Motor neuron (in vitro differentiated cells): ENCODE measurements at regions of chr17 and their contacts with region 1.

Region 1: GRCh38 chr17:46121841-46122485 is 71.3 kb downstream of the KANSL1 start:
- ATAC-seq: no peak
- H3K4me3 ChIP-seq: no peak overlapping the region
- H3K27ac ChIP-seq: no peak overlapping the region
- H3K4me1 ChIP-seq: peaks cover 0 to 3% of the 10 kb centered on the region in 2 donors

Region 2: DNA sequence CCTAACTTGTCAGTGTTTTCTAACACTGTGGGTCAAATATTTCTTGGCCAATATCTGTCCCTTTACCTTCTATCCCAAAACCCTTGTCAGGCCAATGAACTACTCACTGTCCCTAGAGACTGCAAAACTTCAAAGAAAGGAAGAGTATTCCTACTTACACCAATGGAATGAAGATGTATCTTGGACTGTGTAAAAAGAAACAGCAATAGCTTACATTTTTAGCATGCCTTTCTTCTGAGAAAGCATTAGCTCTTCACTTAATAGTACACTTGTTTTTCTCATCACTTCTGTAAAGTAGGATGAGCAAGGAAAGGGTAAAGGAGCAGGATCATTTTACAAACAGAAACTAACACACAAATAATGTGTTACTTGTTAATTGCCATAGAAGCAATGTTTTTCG is 49.0 kb before region 1 on chr17:
- in situ Hi-C with region 1: loop called in 1 of 9 experiments (anchors 10 kb)
- ATAC-seq: peak in 3 of 8 experiments; percentile 22 to 53 (median 36)
- H3K4me3 ChIP-seq: no peak overlapping the region
- H3K27ac ChIP-seq: no peak overlapping the region
- H3K4me1 ChIP-seq: peaks cover 4 to 5% of the 10 kb centered on the region in 2 donors

Region 3: GRCh38 chr17:46979147-46979863 is 857.3 kb after region 1 on chr17 and contains the start of gene RPRML:
- in situ Hi-C with region 1: no loop called
- ATAC-seq: peak; percentile 67 to 82 (median 80)
- H3K4me3 ChIP-seq: peak within 1 kb of the TSS; percentile 30 to 37 (median 36)
- H3K27ac ChIP-seq: no peak within 1 kb of the TSS
- H3K4me1 ChIP-seq: peaks cover 5% of the 10 kb centered on the region in 2 donors
- total RNA-seq, gene RPRML: 0.18 to 1.1 (median 0.52) TPM in 6 of 8 experiments, not detected in the others